ENCODE measurements at regions of chr3 and their contacts with region 1.

Region 1: GRCh38 chr3:17032407-17033034 is 147.8 kb downstream of the PLCL2 start:
- DNase-seq: no peak
- H3K4me3 ChIP-seq: no peak overlapping the region
- H3K27ac ChIP-seq: no peak overlapping the region
- H3K4me1 ChIP-seq: no peaks in the 10 kb centered on the region
- H3K27me3 ChIP-seq: no peaks in the 10 kb centered on the region
- CTCF ChIP-seq: peak in 3 of 4 experiments; percentile 18 to 45 (median 18)
- EP300 ChIP-seq: no peak
- POLR2A ChIP-seq: no peak

Region 2: GRCh38 chr3:16606398-16606797 is 426.1 kb before region 1 on chr3:
- intact Hi-C with region 1: loop called (anchors 5 kb)
- DNase-seq: no peak
- H3K4me3 ChIP-seq: no peak overlapping the region
- H3K27ac ChIP-seq: no peak overlapping the region
- H3K4me1 ChIP-seq: peaks cover 0 to 12% (median 1%) of the 10 kb centered on the region in 4 donors
- H3K27me3 ChIP-seq: no peaks in the 10 kb centered on the region
- CTCF ChIP-seq: no peak
- EP300 ChIP-seq: no peak
- POLR2A ChIP-seq: no peak

Measured in sigmoid colon (tissue), 7 donors.